SK-N-SH (cell line): ENCODE measurements at regions of chr4 and their contacts with region 1.

Region 1: DNA sequence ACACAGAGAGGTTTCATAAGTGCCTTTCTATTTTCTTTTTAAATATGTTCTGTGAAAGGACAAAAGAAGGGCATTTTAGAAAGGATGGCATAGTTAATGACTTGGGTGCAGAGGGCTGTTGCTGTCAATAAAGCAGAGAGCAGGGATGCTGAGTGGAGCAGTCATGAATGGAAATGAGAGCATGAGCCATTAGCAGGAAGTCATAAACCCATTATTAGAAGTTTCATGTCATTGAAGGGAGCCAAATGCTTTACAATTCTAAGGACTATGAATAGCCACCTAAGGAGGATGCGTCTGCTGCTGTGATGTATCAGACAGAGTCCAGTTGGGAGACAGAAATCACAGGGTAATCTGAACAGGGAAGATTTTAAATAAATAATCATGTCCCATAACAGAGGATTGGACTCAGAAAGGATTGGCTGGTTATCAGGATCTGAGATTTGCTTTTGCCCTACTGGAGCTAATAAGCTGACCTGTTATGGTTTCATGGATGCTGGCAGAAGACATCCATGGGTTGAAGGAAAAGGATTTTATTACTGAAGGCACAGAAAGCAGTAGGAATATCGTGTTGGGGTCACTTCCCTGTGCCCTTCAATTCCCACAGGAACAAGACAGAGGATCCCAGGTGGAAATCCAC is 47.5 kb upstream of the WDR19 start:
- DNase-seq: peak; percentile 10
- H3K4me3 ChIP-seq: peak overlapping the region in 1 of 2 experiments; percentile 3; a peak in 1 of 4 replicates
- H3K27ac ChIP-seq: peak overlapping the region; percentile 21 to 29; a peak in 3 of 4 replicates
- H3K4me1 ChIP-seq: peaks cover 0 to 7% of the 10 kb centered on the region in 2 experiments; a peak in 1 of 4 replicates
- H3K27me3 ChIP-seq: no peaks in the 10 kb centered on the region
- CTCF ChIP-seq: no peak
- EP300 ChIP-seq: no peak
- RAD21 ChIP-seq: no peak

Region 2: GRCh38 chr4:38759113-38759789 is 375.6 kb before region 1 on chr4:
- CTCF ChIA-PET with region 1: interaction called, 11 read pairs
- POLR2A ChIA-PET with region 1: no interaction called
- DNase-seq: peak; percentile 58
- H3K4me3 ChIP-seq: no peak overlapping the region; a peak in 1 of 4 replicates
- H3K27ac ChIP-seq: no peak overlapping the region
- H3K4me1 ChIP-seq: no peaks in the 10 kb centered on the region; a peak in 1 of 4 replicates
- H3K27me3 ChIP-seq: no peaks in the 10 kb centered on the region
- CTCF ChIP-seq: peak; percentile 86
- EP300 ChIP-seq: no peak
- RAD21 ChIP-seq: peak; percentile 87

Region 3: GRCh38 chr4:38902695-38903094 is 232.1 kb before region 1 on chr4:
- CTCF ChIA-PET with region 1: interaction called, 178 read pairs
- POLR2A ChIA-PET with region 1: no interaction called
- DNase-seq: peak; percentile 52
- H3K4me3 ChIP-seq: no peak overlapping the region
- H3K27ac ChIP-seq: no peak overlapping the region
- H3K4me1 ChIP-seq: peaks cover 0 to 7% of the 10 kb centered on the region in 2 experiments; a peak in 2 of 4 replicates
- H3K27me3 ChIP-seq: no peaks in the 10 kb centered on the region
- CTCF ChIP-seq: peak; percentile 57
- EP300 ChIP-seq: no peak
- RAD21 ChIP-seq: peak; percentile 88

Region 4: DNA sequence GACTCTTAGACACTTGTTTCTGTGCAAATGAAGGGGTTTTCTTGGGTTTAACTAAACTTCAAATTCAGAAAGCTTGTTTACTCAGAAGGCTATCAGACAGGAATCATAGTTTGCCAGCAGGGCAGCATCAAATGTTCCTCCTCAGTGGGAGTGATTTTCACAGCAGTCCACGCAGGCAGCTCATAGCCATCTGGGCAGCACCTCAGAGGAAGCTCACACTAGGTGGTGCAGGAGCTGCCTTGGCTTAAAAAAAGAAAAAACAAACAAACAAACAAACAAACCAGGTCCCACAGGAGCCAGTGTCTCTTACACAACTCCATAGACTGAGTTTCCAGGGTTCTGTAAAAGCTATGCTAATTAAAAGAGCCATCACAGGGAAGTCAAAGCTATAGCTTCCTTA is 83.3 kb before region 1 on chr4:
- CTCF ChIA-PET with region 1: interaction called, 14 read pairs
- POLR2A ChIA-PET with region 1: no interaction called
- DNase-seq: no peak
- H3K4me3 ChIP-seq: no peak overlapping the region
- H3K27ac ChIP-seq: no peak overlapping the region
- H3K4me1 ChIP-seq: peaks cover 2 to 23% of the 10 kb centered on the region in 2 experiments; a peak in 3 of 4 replicates
- H3K27me3 ChIP-seq: no peaks in the 10 kb centered on the region
- CTCF ChIP-seq: no peak
- EP300 ChIP-seq: no peak
- RAD21 ChIP-seq: no peak

Region 5: GRCh38 chr4:39106011-39106410 is 28.8 kb before region 1 on chr4:
- CTCF ChIA-PET with region 1: interaction called, 16 read pairs
- POLR2A ChIA-PET with region 1: no interaction called
- DNase-seq: no peak
- H3K4me3 ChIP-seq: no peak overlapping the region
- H3K27ac ChIP-seq: no peak overlapping the region
- H3K4me1 ChIP-seq: peaks cover 0 to 9% of the 10 kb centered on the region in 2 experiments; a peak in 1 of 4 replicates
- H3K27me3 ChIP-seq: no peaks in the 10 kb centered on the region
- CTCF ChIP-seq: no peak
- EP300 ChIP-seq: no peak
- RAD21 ChIP-seq: no peak

Region 6: GRCh38 chr4:39205000-39205399 is 70.2 kb after region 1 on chr4:
- CTCF ChIA-PET with region 1: no interaction called
- POLR2A ChIA-PET with region 1: no interaction called
- DNase-seq: peak; percentile 39
- H3K4me3 ChIP-seq: no peak overlapping the region
- H3K27ac ChIP-seq: peak overlapping the region in 1 of 2 experiments; percentile 89; a peak in 2 of 4 replicates
- H3K4me1 ChIP-seq: peaks cover 0 to 9% of the 10 kb centered on the region in 2 experiments; a peak in 2 of 4 replicates
- H3K27me3 ChIP-seq: no peaks in the 10 kb centered on the region
- CTCF ChIP-seq: no peak
- EP300 ChIP-seq: peak in 1 of 2 experiments; percentile 87; a peak in 2 of 4 replicates
- RAD21 ChIP-seq: no peak

Region 7: DNA sequence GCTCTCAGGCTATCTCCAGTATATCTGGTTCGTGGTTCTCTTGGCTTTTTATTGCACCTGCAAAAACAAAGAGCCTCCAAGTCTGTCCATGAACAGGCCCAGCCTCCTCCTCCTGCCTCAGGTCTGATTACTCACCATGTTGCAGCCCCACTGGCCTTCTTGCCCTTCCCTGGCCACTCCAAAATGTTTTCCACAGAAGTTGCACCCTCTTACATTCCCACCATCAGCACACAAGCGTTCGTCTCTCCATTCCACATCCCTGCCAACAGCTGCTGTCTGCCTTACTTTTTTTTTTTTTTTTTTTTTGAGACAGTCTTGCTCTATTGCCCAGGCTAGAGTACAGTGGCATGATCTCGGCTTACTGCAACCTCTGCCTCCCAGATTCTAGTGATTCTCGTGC is 144.6 kb after region 1 on chr4:
- CTCF ChIA-PET with region 1: no interaction called
- POLR2A ChIA-PET with region 1: no interaction called
- DNase-seq: no peak
- H3K4me3 ChIP-seq: no peak overlapping the region
- H3K27ac ChIP-seq: no peak overlapping the region
- H3K4me1 ChIP-seq: peaks cover 0 to 21% of the 10 kb centered on the region in 2 experiments; a peak in 1 of 4 replicates
- H3K27me3 ChIP-seq: no peaks in the 10 kb centered on the region
- CTCF ChIP-seq: no peak
- EP300 ChIP-seq: no peak
- RAD21 ChIP-seq: no peak